Dendritic cell treated with granulocyte-macrophage colony-stimulating factor and Interleukin-4, amounts not matched to agents 40 ng/mL and 50 ng/mL, for 4 days (primary cell): ENCODE measurements at regions of chr13 and their contacts with region 1.

Region 1: GRCh38 chr13:100254002-100254401 is 165.1 kb downstream of the PCCA start:
- H3K4me3 Mint-ChIP-seq: no peak overlapping the region
- H3K27ac Mint-ChIP-seq: no peak overlapping the region
- H3K4me1 Mint-ChIP-seq: peaks cover 13% of the 10 kb centered on the region
- H3K27me3 Mint-ChIP-seq: no peaks in the 10 kb centered on the region

Region 2: DNA sequence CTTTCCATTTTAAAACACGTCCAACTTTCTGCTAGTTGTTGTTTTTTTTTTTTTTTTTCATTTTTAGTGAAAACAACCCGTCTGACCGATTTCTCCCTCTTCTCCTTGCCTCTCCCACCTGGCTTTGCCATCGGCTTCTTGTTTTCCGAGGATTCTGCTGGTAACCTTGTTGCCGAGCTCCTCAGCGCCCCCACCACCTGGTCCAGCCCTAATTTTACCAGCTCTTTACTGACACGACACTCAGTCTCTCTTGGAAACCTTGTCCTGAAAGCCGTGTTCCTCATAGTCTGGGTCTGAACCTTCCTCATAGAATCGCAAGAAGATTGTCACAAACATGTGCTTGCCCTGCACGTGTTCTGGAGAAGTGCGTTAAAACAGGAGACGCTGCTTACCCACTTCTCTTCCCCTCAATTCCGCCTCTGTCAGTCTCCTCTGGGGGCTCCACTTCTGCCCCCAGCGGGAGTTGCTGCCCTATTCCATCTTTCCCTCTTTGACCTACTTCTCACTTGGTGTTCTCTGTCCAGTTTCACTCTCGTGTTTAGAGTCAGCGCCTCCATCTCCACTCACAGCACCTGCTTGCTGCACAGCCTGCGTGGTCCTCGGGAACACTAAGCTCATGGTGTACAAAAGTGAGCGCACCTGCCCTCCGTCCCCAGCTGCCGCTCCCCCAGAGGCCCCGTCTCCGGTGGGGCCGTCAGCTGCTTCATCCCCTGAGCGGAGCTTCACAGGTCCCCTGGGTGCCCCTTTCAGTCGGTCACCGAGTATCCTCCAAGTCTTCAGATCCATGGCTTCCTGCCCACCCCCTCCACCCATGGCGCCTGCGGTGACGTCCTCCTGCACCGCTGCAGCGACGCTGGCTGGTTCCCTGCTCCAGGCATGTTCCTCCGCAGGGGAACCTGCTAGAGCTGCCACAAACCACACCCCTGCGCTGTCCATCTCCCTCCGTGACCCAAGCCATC is 687.6 kb before region 1 on chr13:
- intact Hi-C with region 1: no loop called
- H3K4me3 Mint-ChIP-seq: no peak overlapping the region
- H3K27ac Mint-ChIP-seq: no peak overlapping the region
- H3K4me1 Mint-ChIP-seq: no peaks in the 10 kb centered on the region
- H3K27me3 Mint-ChIP-seq: peaks cover 2% of the 10 kb centered on the region

Region 3: GRCh38 chr13:100138859-100139491 is 115.0 kb before region 1 on chr13:
- intact Hi-C with region 1: no loop called
- H3K4me3 Mint-ChIP-seq: no peak overlapping the region
- H3K27ac Mint-ChIP-seq: no peak overlapping the region
- H3K4me1 Mint-ChIP-seq: no peaks in the 10 kb centered on the region
- H3K27me3 Mint-ChIP-seq: no peaks in the 10 kb centered on the region

Region 4: DNA sequence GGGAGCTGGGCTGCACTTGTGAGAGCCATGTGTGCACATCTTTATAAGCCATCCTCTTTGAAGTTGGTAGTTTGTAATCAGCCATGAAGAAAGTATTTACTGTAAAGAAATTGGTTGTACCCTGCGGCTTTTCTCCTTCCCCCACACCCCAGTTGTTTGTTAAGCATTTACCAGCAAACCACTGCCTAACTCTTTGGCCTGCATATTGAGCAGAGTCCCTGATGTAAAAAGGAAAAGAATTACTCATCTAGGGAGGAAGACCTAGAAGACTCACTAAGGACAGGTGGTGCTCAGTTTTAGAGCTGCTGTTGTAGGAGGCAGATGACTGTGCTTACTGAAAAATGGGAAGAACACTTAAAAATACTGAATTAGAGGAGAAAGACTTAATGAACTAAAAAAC is 80.2 kb after region 1 on chr13:
- intact Hi-C with region 1: no loop called
- H3K4me3 Mint-ChIP-seq: no peak overlapping the region
- H3K27ac Mint-ChIP-seq: no peak overlapping the region
- H3K4me1 Mint-ChIP-seq: no peaks in the 10 kb centered on the region
- H3K27me3 Mint-ChIP-seq: no peaks in the 10 kb centered on the region

Region 5: GRCh38 chr13:100483841-100484381 is 229.9 kb after region 1 on chr13:
- intact Hi-C with region 1: no loop called
- H3K4me3 Mint-ChIP-seq: no peak overlapping the region
- H3K27ac Mint-ChIP-seq: no peak overlapping the region
- H3K4me1 Mint-ChIP-seq: peaks cover 15% of the 10 kb centered on the region
- H3K27me3 Mint-ChIP-seq: peaks cover 2% of the 10 kb centered on the region

Region 6: GRCh38 chr13:100506154-100506553 is 252.2 kb after region 1 on chr13:
- intact Hi-C with region 1: loop called (anchors 5 kb)
- H3K4me3 Mint-ChIP-seq: no peak overlapping the region
- H3K27ac Mint-ChIP-seq: no peak overlapping the region
- H3K4me1 Mint-ChIP-seq: peaks cover 31% of the 10 kb centered on the region
- H3K27me3 Mint-ChIP-seq: peaks cover 10% of the 10 kb centered on the region